Heart right ventricle (tissue), 16 donors: ENCODE measurements at regions of chr1 and their contacts with region 1.

Region 1: GRCh38 chr1:109687616-109688499 is at the start of gene GSTM1:
- DNase-seq: peak; percentile 82 to 84
- ATAC-seq: peak in 5 of 8 donors; percentile 99
- H3K4me3 ChIP-seq: peak within 1 kb of the TSS in 5 of 10 donors; percentile 48 to 66 (median 63)
- H3K27ac ChIP-seq: peak within 1 kb of the TSS in 5 of 10 donors; percentile 58 to 90 (median 80)
- H3K4me1 ChIP-seq: peaks cover 0 to 38% (median 0%) of the 10 kb centered on the region in 9 donors
- H3K27me3 ChIP-seq: no peaks in the 10 kb centered on the region
- CTCF ChIP-seq: peak in 5 of 9 donors; percentile 16 to 82 (median 63)
- total RNA-seq, gene GSTM1: 28.7 to 57.7 (median 36.9) TPM in 6 of 10 donors, not detected in the others

Region 2: DNA sequence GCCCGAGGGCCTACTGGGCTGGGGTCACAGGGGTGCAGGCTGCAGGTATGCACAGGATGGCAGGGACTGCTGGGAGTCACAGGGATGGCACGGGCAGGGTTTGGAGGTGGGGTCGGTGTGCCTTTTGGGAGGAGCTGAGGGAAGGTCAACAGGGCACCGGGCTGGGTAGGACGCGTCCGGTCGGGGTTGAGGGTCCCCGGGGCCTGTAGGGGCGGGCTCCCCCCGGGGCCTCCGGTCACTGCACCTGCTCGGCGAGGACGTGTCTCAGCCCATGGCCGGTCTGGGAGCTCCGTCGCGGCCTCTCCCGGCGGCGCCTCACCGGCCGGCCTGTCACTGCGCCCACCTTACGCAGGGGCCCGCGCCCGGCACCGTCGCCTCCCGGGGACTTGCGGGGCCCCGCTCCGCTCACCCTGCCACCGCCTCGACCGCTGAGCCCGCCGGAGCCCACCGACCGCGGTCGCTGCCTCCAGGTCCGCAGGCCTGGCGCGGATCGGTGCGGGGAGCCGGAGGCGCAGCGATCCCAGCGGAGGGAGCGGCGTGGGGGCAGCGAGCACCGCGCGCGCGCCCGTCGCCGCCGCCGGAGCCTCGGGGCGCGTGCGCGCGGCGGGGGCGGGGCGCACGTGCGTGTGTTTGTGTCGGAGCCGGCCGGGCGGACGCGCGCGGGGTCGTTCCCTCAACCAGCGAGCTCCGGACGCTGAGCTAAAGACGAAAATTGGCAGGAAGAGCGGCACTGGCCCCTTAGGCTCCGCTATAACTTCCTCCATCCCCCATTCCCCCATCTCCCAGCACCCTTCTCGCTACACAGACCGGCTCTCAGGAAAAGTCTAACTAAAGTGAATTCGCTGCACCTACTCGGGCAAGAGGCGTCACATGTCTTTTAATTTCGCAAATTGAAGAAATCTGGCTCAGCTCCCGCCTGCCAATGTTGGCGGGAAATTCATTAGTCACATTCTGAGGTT is 178.4 kb before region 1 on chr1 and contains the start of gene AMIGO1:
- intact Hi-C with region 1: no loop called
- DNase-seq: peak; percentile 56 to 67
- ATAC-seq: peak; percentile 69 to 91 (median 78)
- H3K4me3 ChIP-seq: peak within 1 kb of the TSS; percentile 68 to 84 (median 73)
- H3K27ac ChIP-seq: peak within 1 kb of the TSS in 9 of 10 donors; percentile 47 to 78 (median 66)
- H3K4me1 ChIP-seq: peaks cover 0 to 18% (median 13%) of the 10 kb centered on the region in 9 donors
- H3K27me3 ChIP-seq: peaks cover 0 to 5% (median 0%) of the 10 kb centered on the region in 7 donors
- CTCF ChIP-seq: no peak
- total RNA-seq, gene AMIGO1: 11.9 to 16.6 (median 14.7) TPM

Region 3: DNA sequence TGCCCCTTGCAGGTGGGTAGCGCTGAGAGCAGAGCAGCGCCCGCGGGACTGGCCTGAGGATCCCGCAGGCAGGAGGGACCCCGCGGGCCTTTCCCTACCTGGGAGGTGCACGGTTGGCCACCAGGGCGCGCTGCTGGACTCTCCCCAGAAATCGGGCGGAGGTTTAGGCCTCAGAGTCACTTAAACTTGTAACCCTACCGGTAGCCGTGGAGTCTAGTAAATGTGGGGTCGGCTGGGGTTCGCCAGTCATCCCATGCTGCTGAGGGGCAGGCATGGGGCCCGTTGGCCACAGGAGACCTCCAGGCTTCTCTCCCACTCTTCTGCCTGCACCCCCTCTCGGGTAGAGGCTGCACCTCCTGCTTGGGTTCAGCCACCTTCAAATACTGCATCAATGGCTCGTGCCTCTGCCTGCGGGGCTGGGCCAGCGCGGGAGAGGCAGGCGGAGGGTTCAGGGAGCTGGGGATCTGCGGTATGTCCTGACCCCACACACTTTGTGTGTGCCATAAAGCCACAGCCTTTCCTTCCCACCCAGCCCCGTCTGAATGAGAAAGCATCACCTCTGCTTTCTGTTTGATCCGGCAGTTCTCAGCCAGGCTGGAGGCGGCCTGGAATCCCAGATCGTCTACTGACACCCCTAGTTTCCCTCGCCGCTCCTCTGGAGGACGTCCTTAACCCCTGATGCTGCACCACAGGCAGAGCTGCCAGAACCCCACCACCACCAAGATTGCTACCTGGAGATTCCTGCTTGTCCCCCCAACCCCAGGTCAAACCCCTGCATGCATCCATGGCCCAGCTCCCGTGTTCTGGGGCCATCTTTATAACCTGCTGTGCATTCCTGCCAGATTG is 44.2 kb before region 1 on chr1:
- intact Hi-C with region 1: loop called in 5 of 10 experiments (anchors 5 kb)
- DNase-seq: peak; percentile 81 to 90
- ATAC-seq: peak; percentile 71 to 94 (median 89)
- H3K4me3 ChIP-seq: peak overlapping the region in 1 of 10 donors; percentile 7
- H3K27ac ChIP-seq: no peak overlapping the region
- H3K4me1 ChIP-seq: peaks cover 0 to 12% (median 6%) of the 10 kb centered on the region in 9 donors
- H3K27me3 ChIP-seq: no peaks in the 10 kb centered on the region
- CTCF ChIP-seq: peak; percentile 75 to 93 (median 88)

Region 4: DNA sequence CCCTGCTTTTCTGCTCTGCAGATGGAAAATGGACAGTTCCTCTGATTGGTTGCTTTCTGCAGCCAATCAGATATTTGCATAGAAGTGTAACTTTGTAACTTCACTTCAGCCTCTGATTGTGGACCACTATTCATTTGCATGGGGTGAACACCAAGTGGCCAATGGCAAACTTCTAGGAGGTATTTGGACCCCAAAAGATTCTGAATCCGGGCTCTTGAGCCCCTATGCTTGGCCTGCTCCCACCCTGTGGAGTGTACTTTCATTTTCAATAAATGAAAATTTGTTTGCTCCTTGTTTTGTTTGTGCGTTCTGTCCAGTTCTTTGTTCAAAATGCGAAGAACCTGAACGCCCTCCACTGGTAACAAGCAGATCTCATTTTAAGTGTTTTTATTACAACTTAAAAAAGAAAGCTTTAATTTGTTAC is 38.4 kb before region 1 on chr1:
- intact Hi-C with region 1: loop called in 5 of 10 experiments (anchors 5 kb)
- DNase-seq: no peak
- ATAC-seq: peak in 5 of 8 donors; percentile 15 to 46 (median 33)
- H3K4me3 ChIP-seq: peak overlapping the region in 6 of 10 donors; percentile 29 to 42 (median 38)
- H3K27ac ChIP-seq: peak overlapping the region in 1 of 10 donors; percentile 4
- H3K4me1 ChIP-seq: peaks cover 0 to 2% (median 0%) of the 10 kb centered on the region in 9 donors
- H3K27me3 ChIP-seq: no peaks in the 10 kb centered on the region
- CTCF ChIP-seq: peak in 7 of 9 donors; percentile 17 to 52 (median 39)

Region 5: GRCh38 chr1:109762821-109763645 is 75.2 kb after region 1 on chr1:
- intact Hi-C with region 1: no loop called
- DNase-seq: peak in 1 of 2 donors; percentile 5
- ATAC-seq: peak in 2 of 8 donors; percentile 2 to 10
- H3K4me3 ChIP-seq: no peak overlapping the region
- H3K27ac ChIP-seq: peak overlapping the region in 2 of 10 donors; percentile 39 to 73
- H3K4me1 ChIP-seq: peaks cover 0 to 33% (median 12%) of the 10 kb centered on the region in 9 donors
- H3K27me3 ChIP-seq: no peaks in the 10 kb centered on the region
- CTCF ChIP-seq: no peak

Region 6: DNA sequence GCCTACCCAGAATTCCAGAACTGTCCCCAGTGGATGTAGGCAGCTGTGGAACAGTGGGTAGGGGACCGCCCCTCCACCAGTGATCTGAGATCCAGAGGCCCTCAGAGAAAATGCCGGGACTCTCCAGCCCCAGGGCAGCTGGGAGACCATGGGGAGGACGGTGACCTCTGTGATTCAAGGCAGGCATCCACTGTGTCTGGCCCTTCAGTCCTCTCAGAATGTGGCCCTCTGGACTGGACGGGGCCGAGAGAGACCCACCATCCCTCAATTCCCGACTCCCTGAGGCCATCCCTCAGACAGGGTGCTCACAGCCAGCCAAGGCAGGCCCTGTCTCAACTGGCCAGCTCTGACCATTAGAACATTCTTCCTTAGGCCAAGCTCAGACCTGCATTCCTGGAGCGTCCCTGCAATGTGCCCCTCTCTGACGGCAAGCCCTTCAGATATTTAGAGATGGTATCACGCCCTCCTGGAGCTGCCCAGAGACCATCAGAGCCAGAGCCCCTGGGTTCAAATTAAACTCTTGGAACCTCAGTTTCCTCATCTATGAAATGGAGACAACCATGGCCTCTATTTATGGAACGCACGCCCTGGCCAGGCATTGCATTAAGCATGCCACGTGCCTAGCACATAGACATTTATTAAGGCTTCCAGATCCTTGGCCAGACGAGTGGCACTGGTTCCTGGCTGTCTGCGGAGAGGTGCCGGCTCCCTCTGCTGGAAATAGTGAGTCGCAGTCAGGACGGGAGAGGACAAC is 85.5 kb after region 1 on chr1:
- intact Hi-C with region 1: no loop called
- DNase-seq: peak; percentile 77 to 86
- ATAC-seq: peak; percentile 82 to 90 (median 87)
- H3K4me3 ChIP-seq: no peak overlapping the region
- H3K27ac ChIP-seq: no peak overlapping the region
- H3K4me1 ChIP-seq: peaks cover 0 to 21% (median 8%) of the 10 kb centered on the region in 9 donors
- H3K27me3 ChIP-seq: no peaks in the 10 kb centered on the region
- CTCF ChIP-seq: peak; percentile 77 to 93 (median 87)